Caco-2 (cell line): ENCODE measurements at regions of chr3 and their contacts with region 1.

Region 1: GRCh38 chr3:53160660-53161449 is at the start of gene PRKCD:
- DNase-seq: peak; percentile 83 to 85
- H3K4me3 ChIP-seq: peak within 1 kb of the TSS; percentile 84
- H3K4me3 Mint-ChIP-seq: peak within 1 kb of the TSS; percentile 91
- H3K27ac Mint-ChIP-seq: peak within 1 kb of the TSS; percentile 90
- H3K4me1 ChIP-seq: peaks cover 34% of the 10 kb centered on the region
- H3K4me1 Mint-ChIP-seq: peaks cover 34% of the 10 kb centered on the region
- H3K27me3 ChIP-seq: no peaks in the 10 kb centered on the region
- H3K27me3 Mint-ChIP-seq: no peaks in the 10 kb centered on the region
- CTCF ChIP-seq: peak; percentile 35 to 54
- total RNA-seq, gene PRKCD: 30.9 and 31.5 TPM in 2 replicates

Region 2: GRCh38 chr3:52798978-52799476 is 361.8 kb before region 1 on chr3:
- CTCF ChIA-PET with region 1: no interaction called
- POLR2A ChIA-PET with region 1: no interaction called
- intact Hi-C with region 1: no loop called
- DNase-seq: peak in 1 of 2 experiments; percentile 21
- H3K4me3 ChIP-seq: no peak overlapping the region
- H3K4me3 Mint-ChIP-seq: no peak overlapping the region
- H3K27ac Mint-ChIP-seq: no peak overlapping the region
- H3K4me1 ChIP-seq: no peaks in the 10 kb centered on the region
- H3K4me1 Mint-ChIP-seq: peaks cover 8% of the 10 kb centered on the region
- H3K27me3 ChIP-seq: no peaks in the 10 kb centered on the region
- H3K27me3 Mint-ChIP-seq: no peaks in the 10 kb centered on the region
- CTCF ChIP-seq: peak; percentile 5 to 39

Region 3: DNA sequence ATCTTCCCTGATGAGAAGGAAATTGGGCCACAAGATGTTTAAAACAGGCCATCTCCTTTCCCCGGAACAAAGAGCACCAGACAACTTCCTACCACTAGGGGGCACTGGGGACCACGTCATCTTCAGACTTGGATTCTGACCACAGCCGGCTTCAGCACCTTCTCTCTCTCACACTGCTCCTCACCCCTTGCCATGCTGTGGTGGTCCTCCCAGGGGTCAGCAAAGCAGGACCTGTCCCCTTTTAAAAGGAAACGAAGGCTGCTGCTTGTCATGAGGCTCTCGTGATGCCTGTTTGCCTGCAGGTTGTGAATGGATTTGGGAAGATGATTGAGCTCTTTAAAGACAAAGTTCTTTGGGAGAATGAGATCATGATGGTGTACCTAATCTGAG is 46.8 kb before region 1 on chr3:
- CTCF ChIA-PET with region 1: interaction called, 3 read pairs
- POLR2A ChIA-PET with region 1: no interaction called
- intact Hi-C with region 1: loop called (anchors 5 kb)
- DNase-seq: peak; percentile 75 to 82
- H3K4me3 ChIP-seq: no peak overlapping the region
- H3K4me3 Mint-ChIP-seq: no peak overlapping the region
- H3K27ac Mint-ChIP-seq: no peak overlapping the region
- H3K4me1 ChIP-seq: no peaks in the 10 kb centered on the region
- H3K4me1 Mint-ChIP-seq: no peaks in the 10 kb centered on the region
- H3K27me3 ChIP-seq: no peaks in the 10 kb centered on the region
- H3K27me3 Mint-ChIP-seq: no peaks in the 10 kb centered on the region
- CTCF ChIP-seq: peak; percentile 85 to 89

Region 4: GRCh38 chr3:53130179-53131061 is 30.4 kb before region 1 on chr3 and contains the start of gene RFT1:
- CTCF ChIA-PET with region 1: interaction called, 7 read pairs
- POLR2A ChIA-PET with region 1: interaction called, 3 read pairs
- intact Hi-C with region 1: loop called (anchors 1 kb)
- DNase-seq: peak; percentile 96 to 97
- H3K4me3 ChIP-seq: peak within 1 kb of the TSS; percentile 75
- H3K4me3 Mint-ChIP-seq: peak within 1 kb of the TSS; percentile 84
- H3K27ac Mint-ChIP-seq: peak within 1 kb of the TSS; percentile 77
- H3K4me1 ChIP-seq: peaks cover 14% of the 10 kb centered on the region
- H3K4me1 Mint-ChIP-seq: peaks cover 18% of the 10 kb centered on the region
- H3K27me3 ChIP-seq: no peaks in the 10 kb centered on the region
- H3K27me3 Mint-ChIP-seq: no peaks in the 10 kb centered on the region
- CTCF ChIP-seq: no peak
- total RNA-seq, gene RFT1: 33.1 and 35.7 TPM in 2 replicates

Region 5: DNA sequence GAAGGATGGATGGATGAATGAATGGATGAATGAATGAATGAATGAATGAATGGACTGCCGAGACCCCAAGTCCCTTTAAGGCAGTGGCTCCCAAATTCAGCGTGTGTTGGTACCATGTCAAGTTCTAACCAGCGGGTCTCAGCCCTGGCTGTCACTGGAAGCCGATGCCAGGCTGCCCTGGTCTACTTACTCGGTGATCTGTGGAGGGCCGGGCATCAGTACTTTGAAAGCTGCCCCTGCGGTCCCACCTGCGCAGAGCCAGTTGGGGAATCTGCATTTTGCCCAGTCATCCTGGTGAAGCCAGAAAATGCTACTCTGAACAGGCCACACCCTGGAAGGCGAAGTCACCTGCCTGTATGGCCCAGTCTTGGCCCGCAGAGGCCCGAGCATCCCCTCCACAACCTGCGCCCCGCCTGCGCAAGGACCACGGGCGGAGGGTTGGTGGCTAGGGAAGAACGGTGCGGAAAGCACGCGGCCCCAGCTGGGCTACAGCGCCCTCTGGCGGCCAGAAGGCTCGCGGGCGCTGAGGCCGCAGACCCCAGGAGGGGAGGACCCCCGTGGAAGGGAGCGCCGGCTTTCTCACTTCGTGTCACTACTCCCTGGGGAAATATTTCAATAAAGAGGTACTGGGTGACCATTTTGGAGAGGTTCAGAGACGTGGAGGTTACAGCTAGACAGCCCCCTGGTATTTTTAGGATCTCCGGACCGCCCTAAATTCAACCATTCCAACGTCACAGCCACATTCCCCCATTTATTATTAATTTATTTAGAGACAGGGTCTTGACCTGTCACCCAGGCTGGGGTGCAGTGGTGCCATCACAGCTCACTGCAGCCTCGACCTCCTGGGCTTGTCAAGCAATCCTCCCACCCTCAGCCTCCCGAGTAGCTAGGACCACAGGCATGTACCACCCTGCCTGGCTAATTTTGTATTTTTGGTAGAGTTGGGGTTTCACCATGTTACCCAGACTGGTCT is 35.0 kb after region 1 on chr3:
- CTCF ChIA-PET with region 1: no interaction called
- POLR2A ChIA-PET with region 1: no interaction called
- intact Hi-C with region 1: loop called (anchors 5 kb)
- DNase-seq: peak in 1 of 2 experiments; percentile 65
- H3K4me3 ChIP-seq: no peak overlapping the region
- H3K4me3 Mint-ChIP-seq: no peak overlapping the region
- H3K27ac Mint-ChIP-seq: no peak overlapping the region
- H3K4me1 ChIP-seq: no peaks in the 10 kb centered on the region
- H3K4me1 Mint-ChIP-seq: no peaks in the 10 kb centered on the region
- H3K27me3 ChIP-seq: no peaks in the 10 kb centered on the region; the same call in 1 of the 2 replicates
- H3K27me3 Mint-ChIP-seq: no peaks in the 10 kb centered on the region
- CTCF ChIP-seq: peak; percentile 96 to 97

Region 6: DNA sequence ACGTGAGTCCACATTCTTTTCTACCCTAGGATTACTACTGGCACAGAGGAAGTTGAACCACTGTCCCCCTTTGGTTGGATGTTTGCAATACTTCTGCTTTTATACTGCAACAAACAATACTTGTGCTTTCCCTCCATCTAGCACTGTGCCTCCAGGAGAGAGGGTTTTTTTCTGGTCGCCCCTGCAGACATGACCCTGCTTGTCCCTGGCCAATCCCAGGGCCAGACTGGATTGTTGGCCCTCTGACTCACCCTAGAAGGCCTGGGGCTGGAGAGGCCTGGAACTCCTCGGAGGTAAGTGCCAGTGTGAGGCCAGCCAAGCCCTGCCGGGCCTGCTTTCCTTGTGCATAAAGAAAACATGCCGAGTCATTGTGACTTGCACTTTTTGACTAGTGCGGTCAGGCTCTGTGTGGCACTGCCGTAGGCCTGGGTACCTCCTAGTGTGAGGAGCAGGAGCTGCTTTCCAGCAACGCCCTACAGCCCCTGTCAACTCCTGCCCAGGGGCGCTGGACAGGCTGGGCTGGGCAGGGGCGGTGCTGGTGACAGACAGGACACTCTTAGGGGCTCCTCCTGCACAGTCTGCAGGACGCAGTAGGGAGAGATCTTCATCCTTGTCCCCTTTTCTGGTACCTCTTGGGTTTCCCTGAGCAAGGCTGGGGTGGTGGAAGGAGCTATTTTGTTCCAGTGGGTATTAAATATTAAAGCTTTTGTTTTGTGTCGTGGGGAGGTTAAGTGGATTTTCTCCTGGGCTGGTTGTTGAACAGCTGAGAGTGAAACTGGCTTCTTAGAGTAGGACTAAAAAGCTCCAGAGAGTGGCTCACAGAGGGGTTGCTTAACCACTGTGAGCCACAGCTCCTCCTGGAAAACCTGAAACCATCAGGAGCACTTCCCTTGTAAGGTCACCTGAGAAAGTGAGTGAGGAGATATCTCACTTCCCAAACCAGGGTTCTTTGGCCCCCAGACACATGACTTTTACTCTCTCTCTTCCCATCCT is 109.3 kb after region 1 on chr3:
- CTCF ChIA-PET with region 1: no interaction called
- POLR2A ChIA-PET with region 1: no interaction called
- intact Hi-C with region 1: loop called (anchors 5 kb)
- DNase-seq: peak; percentile 87 to 95
- H3K4me3 ChIP-seq: no peak overlapping the region
- H3K4me3 Mint-ChIP-seq: peak overlapping the region; percentile 7
- H3K27ac Mint-ChIP-seq: peak overlapping the region; percentile 90
- H3K4me1 ChIP-seq: peaks cover 36% of the 10 kb centered on the region
- H3K4me1 Mint-ChIP-seq: peaks cover 29% of the 10 kb centered on the region
- H3K27me3 ChIP-seq: no peaks in the 10 kb centered on the region
- H3K27me3 Mint-ChIP-seq: no peaks in the 10 kb centered on the region
- CTCF ChIP-seq: no peak